Head of caudate nucleus (tissue), 42 donors: ENCODE measurements at regions of chr4 and their contacts with region 1.

Region 1: DNA sequence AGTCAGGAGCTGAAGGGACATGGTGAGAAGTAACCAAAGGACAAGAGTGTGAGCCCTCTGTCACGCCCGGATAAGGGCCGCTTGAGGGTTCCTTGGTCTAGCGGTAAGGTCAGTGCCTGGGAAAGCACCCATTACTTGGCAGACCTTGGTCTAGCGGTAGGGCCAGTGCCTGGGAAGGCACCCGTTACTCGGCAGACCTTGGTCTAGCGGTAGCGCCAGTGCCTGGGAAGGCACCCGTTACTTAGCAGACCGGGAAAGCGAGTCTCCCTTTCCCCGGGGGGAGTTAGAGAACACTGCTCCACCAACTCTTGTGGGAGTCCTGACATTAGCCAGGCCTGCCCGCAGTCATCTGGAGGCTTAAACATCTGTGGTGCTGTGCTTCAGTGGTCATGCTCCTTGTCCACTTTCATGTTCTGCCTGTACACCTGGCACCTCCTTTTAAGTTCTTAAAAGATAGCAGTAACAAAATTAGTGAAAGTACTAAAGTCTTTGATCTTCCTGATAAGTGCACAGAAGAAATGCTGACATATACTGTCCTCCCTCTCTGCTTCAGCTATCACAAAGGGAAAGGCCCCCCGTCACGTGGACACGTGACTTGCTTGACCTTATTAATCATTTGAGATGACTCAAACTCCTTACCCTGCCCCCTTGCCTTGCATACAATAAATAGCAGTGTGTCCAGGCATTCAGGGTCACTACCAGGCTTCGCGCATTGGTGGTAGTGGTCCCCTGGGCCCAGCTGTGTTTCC is 9.3 kb upstream of the SEC24B start:
- DNase-seq: no peak

Region 2: DNA sequence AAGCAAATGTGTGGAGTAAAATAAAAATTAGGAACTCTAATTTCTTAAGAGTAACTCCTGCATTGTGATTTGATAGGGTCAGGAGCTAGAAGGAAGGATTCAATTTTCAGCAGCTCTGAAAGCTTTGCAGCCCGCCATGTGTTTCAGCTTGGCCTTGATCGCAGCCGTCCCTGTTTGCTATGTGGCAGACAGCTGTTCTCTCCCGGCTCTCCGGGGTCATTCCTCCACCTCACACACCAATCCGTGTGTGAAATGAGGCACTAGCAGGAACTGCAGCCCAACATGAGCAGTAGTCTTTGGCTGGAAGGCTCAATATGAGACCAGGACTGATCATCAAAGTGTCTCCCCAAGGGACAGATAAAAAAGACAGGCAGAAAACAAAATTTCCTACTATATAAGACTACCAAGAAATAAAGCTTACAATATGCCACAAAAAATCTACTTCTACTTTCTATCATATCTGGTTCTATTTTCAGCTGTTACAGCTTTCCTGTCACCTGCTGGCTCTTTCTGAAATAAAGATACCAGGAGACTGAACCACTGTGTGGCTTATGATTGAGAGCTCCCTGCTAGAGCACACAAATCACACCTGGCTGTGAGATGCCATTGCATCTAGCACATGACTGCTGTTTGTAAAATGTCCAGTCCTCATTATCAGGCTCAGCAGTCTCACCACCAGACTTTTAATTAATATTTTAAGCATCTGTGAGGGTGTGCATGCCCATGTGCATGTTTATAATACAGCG is 34.7 kb before region 1 on chr4:
- intact Hi-C with region 1: no loop called
- DNase-seq: no peak

Region 3: DNA sequence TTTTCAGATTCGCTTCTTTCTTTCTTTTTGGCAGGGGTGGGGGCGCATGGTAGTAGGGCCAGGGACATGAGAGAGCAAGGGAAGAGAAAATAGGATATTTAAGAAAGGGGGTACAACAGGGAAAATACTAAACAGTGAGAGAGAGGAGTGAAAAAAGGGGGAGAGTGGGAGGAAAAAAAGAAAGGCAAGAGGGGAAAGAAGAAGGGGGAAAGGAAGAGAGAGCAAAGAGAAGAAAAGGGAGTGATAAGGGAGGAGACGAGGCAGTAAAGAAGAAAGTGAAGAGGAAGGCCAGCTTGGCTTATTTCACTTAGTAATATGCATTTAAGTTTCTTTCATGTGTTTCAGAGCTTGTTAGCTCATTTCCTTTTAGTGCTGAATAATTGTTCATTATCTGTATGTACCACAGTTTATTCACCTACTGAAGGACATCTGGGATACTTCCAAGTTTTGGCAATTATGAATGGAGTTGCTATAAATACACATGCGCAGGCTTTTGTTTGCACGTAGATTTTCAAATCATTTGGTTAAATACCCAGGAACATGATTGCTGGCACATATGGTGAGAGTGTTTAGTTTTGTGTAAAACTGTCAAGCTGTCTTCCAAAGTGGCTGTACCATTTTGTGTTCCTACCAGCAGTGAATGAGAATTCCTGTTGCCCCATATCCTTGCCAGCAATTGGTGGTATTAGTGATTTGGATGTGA is 241.7 kb after region 1 on chr4:
- intact Hi-C with region 1: loop called (anchors 10 kb)
- DNase-seq: no peak

Region 4: DNA sequence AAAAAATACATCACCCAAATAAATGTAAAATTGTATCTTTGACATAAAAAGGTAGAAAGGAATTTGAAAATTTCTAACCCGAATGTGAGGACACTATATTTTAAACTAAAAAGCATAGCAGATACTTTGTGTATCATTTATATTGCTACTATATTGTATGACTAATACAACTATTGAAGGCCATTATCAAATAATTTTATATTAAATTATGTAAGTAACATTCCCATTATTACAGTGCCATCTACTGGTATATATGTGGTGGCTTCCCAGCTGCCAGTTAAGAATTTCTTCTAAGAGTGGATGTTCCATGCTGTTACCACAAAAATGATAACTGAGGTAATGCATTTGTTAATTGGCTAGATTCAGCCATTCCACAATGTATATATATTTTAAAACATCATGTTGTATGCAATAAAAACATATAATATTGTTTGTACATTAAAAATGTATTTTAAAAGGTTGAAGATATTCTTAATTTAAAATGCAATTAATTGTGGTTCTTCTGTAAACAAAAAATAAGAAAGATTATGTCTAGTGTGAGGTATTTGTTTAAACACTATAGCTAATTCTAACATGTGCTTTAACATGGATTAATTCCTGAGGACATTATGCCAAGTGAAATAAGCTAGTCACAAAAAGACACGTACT is 553.7 kb after region 1 on chr4:
- intact Hi-C with region 1: loop called (anchors 10 kb)
- DNase-seq: peak in 8 of 42 donors; percentile 11 to 60 (median 23)